A549 (cell line): ENCODE measurements at regions of chr15 and their contacts with region 1.

Region 1: DNA sequence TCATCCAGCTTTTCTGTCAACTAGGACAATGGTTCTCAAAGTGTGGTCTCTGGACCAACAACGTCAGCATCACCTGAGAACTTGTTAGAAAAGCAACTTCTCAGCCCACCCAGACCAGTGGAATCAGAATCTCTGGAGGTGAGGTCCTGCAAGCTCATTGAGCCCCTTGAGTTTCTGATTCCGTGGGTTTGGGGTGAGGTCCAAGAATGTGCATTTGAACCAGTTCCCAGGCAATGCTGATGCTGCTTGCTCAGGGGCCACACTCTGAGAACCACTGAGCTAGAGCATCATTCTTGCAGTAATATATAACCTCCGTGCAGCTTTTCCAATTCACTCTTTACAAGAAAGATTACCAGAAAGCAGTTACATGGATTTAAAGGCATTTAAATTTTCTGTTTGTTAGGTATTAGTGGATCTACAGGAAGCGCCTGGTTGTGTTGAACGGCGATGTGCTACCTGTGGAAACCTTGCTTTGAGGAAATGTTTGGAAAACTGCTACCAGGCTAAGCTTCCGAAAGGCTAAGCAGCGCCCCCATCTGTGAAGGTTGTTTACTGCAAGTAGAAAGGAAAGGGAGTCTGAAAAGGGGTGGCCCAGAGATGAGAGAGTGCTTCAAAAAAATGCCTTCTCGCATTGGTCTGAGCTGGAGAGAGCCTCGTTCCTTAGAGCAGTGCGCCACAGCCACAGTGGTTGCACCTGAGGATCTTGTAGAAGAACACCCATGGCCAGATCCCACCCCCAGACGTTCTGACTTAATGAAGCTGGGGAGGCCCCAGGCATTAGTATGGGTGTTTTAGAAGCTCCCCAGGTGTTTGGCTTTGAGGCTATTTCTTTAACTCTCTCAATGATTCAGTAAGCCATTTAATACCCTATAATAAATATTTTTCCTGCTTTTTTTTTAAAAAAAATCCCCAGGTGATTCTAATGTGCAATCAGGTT is 50.0 kb downstream of the RLBP1 start:
- DNase-seq: peak; percentile 71 to 74
- ATAC-seq: peak; percentile 49 to 87
- H3K4me3 ChIP-seq: no peak overlapping the region
- H3K27ac ChIP-seq: peak overlapping the region in 1 of 2 experiments; percentile 22; a peak in 1 of 6 replicates
- H3K4me1 ChIP-seq: peaks cover 21% of the 10 kb centered on the region
- CTCF ChIP-seq: peak; percentile 95
- EP300 ChIP-seq: no peak
- POLR2A ChIP-seq: no peak
- RAD21 ChIP-seq: peak; percentile 86 to 94

Region 2: GRCh38 chr15:89041507-89041906 is 129.9 kb before region 1 on chr15:
- CTCF ChIA-PET with region 1: interaction called, 224 read pairs
- POLR2A ChIA-PET with region 1: no interaction called
- DNase-seq: no peak
- ATAC-seq: peak; percentile 39 to 53; a peak in 3 of 6 replicates
- H3K4me3 ChIP-seq: no peak overlapping the region
- H3K27ac ChIP-seq: no peak overlapping the region
- H3K4me1 ChIP-seq: no peaks in the 10 kb centered on the region
- CTCF ChIP-seq: no peak
- EP300 ChIP-seq: no peak
- POLR2A ChIP-seq: no peak
- RAD21 ChIP-seq: no peak

Region 3: GRCh38 chr15:89087830-89088604 is 83.4 kb before region 1 on chr15 and contains the start of gene ABHD2:
- CTCF ChIA-PET with region 1: interaction called, 157 read pairs
- POLR2A ChIA-PET with region 1: interaction called, 3 read pairs
- DNase-seq: peak; percentile 100
- ATAC-seq: peak; percentile 92 to 98
- H3K4me3 ChIP-seq: peak within 1 kb of the TSS; percentile 78
- H3K27ac ChIP-seq: peak within 1 kb of the TSS; percentile 80 to 88
- H3K4me1 ChIP-seq: peaks cover 44% of the 10 kb centered on the region
- CTCF ChIP-seq: no peak
- EP300 ChIP-seq: no peak
- POLR2A ChIP-seq: peak; percentile 70
- RAD21 ChIP-seq: 0 out of 5 replicates have a peak, but pooled peaks of 1 of the 2 experiments have one; percentile 30
- polyA plus RNA-seq, gene ABHD2: 63.3 and 76.4 TPM in 2 replicates

Region 4: DNA sequence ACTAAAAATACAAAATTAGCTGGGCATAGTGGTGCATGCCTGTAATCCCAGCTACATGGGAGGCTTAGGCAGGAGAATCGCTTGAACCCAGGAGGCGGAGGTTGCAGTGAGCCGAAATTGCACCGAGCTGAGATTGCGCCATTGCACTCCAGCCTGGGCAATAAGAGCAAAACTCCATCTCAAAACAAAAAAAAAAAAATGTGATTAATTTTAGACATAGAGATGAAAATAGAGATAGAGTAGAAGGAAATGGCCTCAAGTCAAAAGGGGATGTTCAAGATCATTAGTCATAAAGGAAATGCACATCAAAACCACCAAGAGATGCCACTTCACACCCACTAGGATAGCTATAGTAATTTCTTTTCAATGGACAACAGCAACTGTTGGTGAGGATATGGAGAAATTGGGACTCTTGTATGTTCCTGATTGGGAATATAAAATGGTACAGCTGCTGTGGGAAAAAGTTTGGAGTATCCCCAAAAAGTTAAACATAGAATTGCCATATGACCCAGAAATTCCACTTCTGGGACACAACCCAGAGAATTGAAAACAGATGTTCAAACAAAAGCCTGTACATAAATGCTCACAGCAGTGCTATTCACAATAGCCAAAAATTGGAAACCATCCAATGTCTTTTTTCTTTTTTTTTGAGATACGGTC is 27.8 kb before region 1 on chr15:
- CTCF ChIA-PET with region 1: interaction called, 126 read pairs
- POLR2A ChIA-PET with region 1: no interaction called
- DNase-seq: no peak
- ATAC-seq: no peak
- H3K4me3 ChIP-seq: no peak overlapping the region
- H3K27ac ChIP-seq: no peak overlapping the region
- H3K4me1 ChIP-seq: peaks cover 36% of the 10 kb centered on the region
- CTCF ChIP-seq: no peak
- EP300 ChIP-seq: no peak
- POLR2A ChIP-seq: no peak
- RAD21 ChIP-seq: no peak

Region 5: GRCh38 chr15:89197503-89197971 is 26.1 kb after region 1 on chr15:
- CTCF ChIA-PET with region 1: interaction called, 16 read pairs
- POLR2A ChIA-PET with region 1: no interaction called
- DNase-seq: no peak
- ATAC-seq: no peak
- H3K4me3 ChIP-seq: no peak overlapping the region
- H3K27ac ChIP-seq: no peak overlapping the region
- H3K4me1 ChIP-seq: no peaks in the 10 kb centered on the region
- CTCF ChIP-seq: no peak
- EP300 ChIP-seq: no peak
- POLR2A ChIP-seq: no peak
- RAD21 ChIP-seq: no peak

Region 6: DNA sequence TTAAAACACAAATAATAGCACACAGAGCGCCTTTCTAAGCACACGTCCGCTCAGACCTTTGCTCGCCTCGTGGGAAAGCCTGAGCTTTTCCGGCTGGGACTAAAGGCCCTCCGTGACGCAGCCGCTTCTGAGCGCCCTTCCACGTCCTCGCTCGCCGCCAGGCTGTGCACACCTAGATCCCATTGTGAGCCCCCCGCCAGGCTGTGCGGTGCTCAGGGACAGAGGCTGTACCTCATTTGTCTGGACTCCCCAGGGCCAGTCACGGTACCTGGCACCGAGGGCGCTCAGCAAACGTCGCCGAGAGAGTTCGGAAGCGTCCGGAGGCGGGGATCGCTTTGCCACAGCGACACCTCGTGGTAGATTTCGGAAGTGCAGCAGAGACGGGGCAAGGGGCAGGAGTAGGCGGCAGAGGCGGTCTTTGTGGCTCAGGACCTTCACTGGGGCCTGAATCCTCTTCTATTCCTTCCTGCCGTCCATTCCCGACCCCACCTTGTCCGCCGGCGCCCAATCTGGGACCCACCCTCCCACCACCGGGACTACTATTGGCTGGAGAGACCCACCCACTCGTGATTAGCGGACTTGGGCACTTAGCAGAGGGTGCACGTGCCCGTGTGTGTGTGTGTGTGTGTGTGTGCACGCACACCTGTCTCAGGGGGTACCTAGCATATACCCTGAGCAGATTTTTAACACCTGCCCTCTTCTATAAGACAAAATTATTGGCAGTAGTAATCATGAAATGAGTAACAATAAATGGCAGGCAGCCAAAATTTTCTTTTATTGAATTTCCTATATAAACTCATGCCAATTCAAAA is 259.3 kb after region 1 on chr15:
- CTCF ChIA-PET with region 1: no interaction called
- POLR2A ChIA-PET with region 1: no interaction called
- DNase-seq: peak; percentile 80 to 96
- ATAC-seq: peak; percentile 80 to 96
- H3K4me3 ChIP-seq: peak overlapping the region; percentile 41
- H3K27ac ChIP-seq: peak overlapping the region; percentile 69 to 81
- H3K4me1 ChIP-seq: peaks cover 27% of the 10 kb centered on the region; the same call in 2 of the 3 replicates
- CTCF ChIP-seq: peak; percentile 96
- EP300 ChIP-seq: no peak
- POLR2A ChIP-seq: 0 out of 2 replicates have a peak, but pooled peaks have one; percentile 8
- RAD21 ChIP-seq: peak; percentile 83 to 85

Region 7: DNA sequence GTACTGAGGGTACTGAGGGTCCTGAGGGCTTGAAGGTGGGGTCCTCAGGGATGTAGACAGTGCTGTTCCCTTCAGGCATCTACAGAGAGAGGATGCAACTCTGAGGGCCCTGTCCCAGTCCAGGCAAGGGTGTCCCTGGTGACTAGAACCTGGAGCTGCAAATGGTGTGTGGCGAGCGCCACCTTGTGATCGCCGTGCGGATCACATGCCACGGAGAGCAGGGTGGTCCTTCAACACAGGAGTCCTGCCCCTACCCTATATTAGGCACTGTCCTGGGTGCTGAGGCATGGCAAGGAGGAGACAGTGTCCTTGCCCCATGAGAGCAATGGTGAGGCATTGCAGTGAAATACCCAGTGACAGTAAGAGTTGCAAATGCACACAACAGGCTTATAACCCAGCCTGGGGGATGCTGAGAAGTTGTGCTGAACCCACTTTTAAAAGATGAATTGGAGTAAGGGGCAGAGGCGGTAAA is 301.4 kb after region 1 on chr15:
- CTCF ChIA-PET with region 1: no interaction called
- POLR2A ChIA-PET with region 1: no interaction called
- DNase-seq: peak; percentile 78 to 88
- ATAC-seq: peak; percentile 74 to 95
- H3K4me3 ChIP-seq: no peak overlapping the region
- H3K27ac ChIP-seq: no peak overlapping the region
- H3K4me1 ChIP-seq: peaks cover 4% of the 10 kb centered on the region; the same call in 1 of the 3 replicates
- CTCF ChIP-seq: peak; percentile 94
- EP300 ChIP-seq: no peak
- POLR2A ChIP-seq: no peak
- RAD21 ChIP-seq: peak; percentile 92 to 96